Aorta (tissue), 5 donors: ENCODE measurements at regions of chr7 and their contacts with region 1.

Region 1: GRCh38 chr7:2631946-2632732 is at the start of gene TTYH3:
- DNase-seq: peak in 1 of 2 donors; percentile 71
- ATAC-seq: peak; percentile 0
- H3K4me3 ChIP-seq: peak within 1 kb of the TSS; percentile 74 to 79
- H3K27ac ChIP-seq: peak within 1 kb of the TSS in 1 of 2 donors; percentile 66
- H3K4me1 ChIP-seq: no peaks in the 10 kb centered on the region
- H3K27me3 ChIP-seq: no peaks in the 10 kb centered on the region
- total RNA-seq, gene TTYH3: 58.9 to 79.9 TPM

Region 2: GRCh38 chr7:2621061-2621828 is 10.9 kb before region 1 on chr7:
- intact Hi-C with region 1: loop called in 1 of 2 experiments (anchors 1 kb)
- DNase-seq: no peak
- ATAC-seq: peak; percentile 6
- H3K4me3 ChIP-seq: no peak overlapping the region
- H3K27ac ChIP-seq: no peak overlapping the region
- H3K4me1 ChIP-seq: no peaks in the 10 kb centered on the region
- H3K27me3 ChIP-seq: no peaks in the 10 kb centered on the region